Naive thymus-derived CD4-positive, alpha-beta T cell (primary cell): ENCODE measurements at regions of chr1 and their contacts with region 1.

Region 1: GRCh38 chr1:53959664-53960250 is 13.6 kb downstream of the LRRC42 start:
- DNase-seq: peak in 7 of 9 donors; percentile 33 to 62 (median 46)
- ATAC-seq: peak; percentile 86
- H3K4me3 ChIP-seq: no peak overlapping the region
- H3K4me3 Mint-ChIP-seq: no peak overlapping the region
- H3K27ac ChIP-seq: no peak overlapping the region
- H3K27ac Mint-ChIP-seq: no peak overlapping the region
- H3K4me1 ChIP-seq: no peaks in the 10 kb centered on the region
- H3K4me1 Mint-ChIP-seq: peaks cover 4 to 14% (median 5%) of the 10 kb centered on the region in 7 donors
- H3K27me3 ChIP-seq: no peaks in the 10 kb centered on the region
- H3K27me3 Mint-ChIP-seq: no peaks in the 10 kb centered on the region

Region 2: DNA sequence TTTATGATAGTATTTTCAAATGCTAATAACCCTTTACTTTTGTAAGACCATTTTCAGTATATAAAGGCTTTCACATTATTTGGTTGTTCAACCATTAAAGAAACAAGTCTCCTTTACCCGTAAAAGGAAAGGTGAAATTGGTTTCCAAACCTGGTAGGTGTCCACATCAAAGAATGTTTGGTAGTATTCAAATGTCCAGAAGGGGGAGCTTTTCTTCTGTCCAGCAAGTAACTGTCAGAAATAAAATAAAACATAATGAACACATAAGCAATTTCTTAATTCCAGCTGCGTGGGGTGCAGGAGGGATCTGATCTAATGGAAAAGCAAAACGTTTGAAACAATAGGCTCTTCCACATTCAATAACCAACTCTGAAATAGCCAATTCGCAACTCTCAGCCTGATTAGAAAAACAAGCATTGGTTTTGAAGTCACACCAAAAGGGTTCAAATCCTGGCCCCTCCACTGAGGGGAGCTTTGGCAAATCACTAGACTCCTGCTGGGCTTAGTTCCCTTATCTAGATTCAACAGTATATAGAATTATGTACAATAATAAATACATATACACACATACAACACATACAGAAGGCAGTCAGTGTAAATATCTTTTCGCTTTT is 81.2 kb before region 1 on chr1:
- CTCF ChIA-PET with region 1: interaction called, 14 read pairs
- POLR2A ChIA-PET with region 1: no interaction called
- intact Hi-C with region 1: loop called (anchors 1 kb)
- DNase-seq: peak in 2 of 9 donors; percentile 10 to 11
- ATAC-seq: no peak
- H3K4me3 ChIP-seq: no peak overlapping the region
- H3K4me3 Mint-ChIP-seq: no peak overlapping the region
- H3K27ac ChIP-seq: no peak overlapping the region
- H3K27ac Mint-ChIP-seq: no peak overlapping the region
- H3K4me1 ChIP-seq: no peaks in the 10 kb centered on the region
- H3K4me1 Mint-ChIP-seq: peaks cover 0 to 18% (median 8%) of the 10 kb centered on the region in 7 donors
- H3K27me3 ChIP-seq: no peaks in the 10 kb centered on the region
- H3K27me3 Mint-ChIP-seq: no peaks in the 10 kb centered on the region

Region 3: GRCh38 chr1:54008876-54009275 is 49.1 kb after region 1 on chr1:
- CTCF ChIA-PET with region 1: no interaction called
- POLR2A ChIA-PET with region 1: no interaction called
- intact Hi-C with region 1: no loop called
- DNase-seq: no peak
- ATAC-seq: no peak
- H3K4me3 ChIP-seq: no peak overlapping the region
- H3K4me3 Mint-ChIP-seq: no peak overlapping the region
- H3K27ac ChIP-seq: no peak overlapping the region
- H3K27ac Mint-ChIP-seq: peak overlapping the region in 1 of 9 donors; percentile 54
- H3K4me1 ChIP-seq: no peaks in the 10 kb centered on the region
- H3K4me1 Mint-ChIP-seq: peaks cover 0 to 2% (median 0%) of the 10 kb centered on the region in 7 donors
- H3K27me3 ChIP-seq: no peaks in the 10 kb centered on the region
- H3K27me3 Mint-ChIP-seq: peaks cover 0 to 14% (median 0%) of the 10 kb centered on the region in 5 donors